PC-3 (cell line): ENCODE measurements at regions of chr6 and their contacts with region 1.

Region 1: GRCh38 chr6:105431226-105431625 is 28.3 kb upstream of the PREP start:
- DNase-seq: peak; percentile 75
- ATAC-seq: no peak
- H3K4me3 ChIP-seq: no peak overlapping the region
- H3K27ac ChIP-seq: no peak overlapping the region
- H3K4me1 ChIP-seq: peaks cover 51% of the 10 kb centered on the region
- H3K27me3 ChIP-seq: no peaks in the 10 kb centered on the region
- CTCF ChIP-seq: peak; percentile 65

Region 2: DNA sequence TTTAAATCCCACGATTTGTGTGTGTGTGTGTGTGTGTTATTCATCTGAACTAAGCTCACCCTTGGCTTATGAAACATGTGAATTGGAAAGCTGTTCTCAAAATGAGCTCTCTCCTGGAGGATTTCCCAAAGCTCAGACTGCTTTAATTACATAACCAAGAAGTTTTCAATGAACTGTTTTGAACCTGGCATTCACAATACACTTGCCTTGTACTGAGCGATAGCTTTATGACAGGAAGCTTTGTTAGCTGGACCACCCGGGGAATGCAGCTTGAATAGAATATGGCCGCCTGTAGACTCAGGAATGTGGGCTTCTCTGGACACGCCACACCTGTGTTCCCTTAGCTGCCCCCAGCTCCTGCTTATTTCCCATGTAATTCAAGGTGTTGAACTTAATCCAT is 43.0 kb after region 1 on chr6:
- CTCF ChIA-PET with region 1: interaction called, 3 read pairs
- POLR2A ChIA-PET with region 1: no interaction called
- intact Hi-C with region 1: loop called (anchors 1 kb)
- DNase-seq: no peak
- ATAC-seq: no peak
- H3K4me3 ChIP-seq: no peak overlapping the region
- H3K27ac ChIP-seq: no peak overlapping the region
- H3K4me1 ChIP-seq: no peaks in the 10 kb centered on the region
- H3K27me3 ChIP-seq: no peaks in the 10 kb centered on the region
- CTCF ChIP-seq: no peak

Region 3: DNA sequence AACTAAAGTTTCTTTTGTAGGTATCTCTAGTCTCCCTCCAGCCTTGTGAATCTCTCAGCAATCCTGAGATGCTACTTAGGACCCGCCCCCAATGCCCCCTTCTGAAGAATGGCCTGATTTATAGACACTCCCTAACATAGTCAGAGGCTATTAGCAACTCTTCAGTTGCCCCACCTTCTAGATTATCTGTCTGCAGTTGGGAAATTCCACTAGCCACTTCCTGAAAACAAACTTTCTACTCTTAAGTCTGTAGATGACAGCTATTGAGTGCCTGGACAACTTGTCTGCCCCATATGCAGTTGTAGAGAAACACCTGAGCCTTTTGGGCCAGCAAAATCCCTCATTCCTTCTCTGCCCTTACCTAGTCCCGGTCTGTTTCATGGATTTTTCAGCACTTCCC is 159.8 kb after region 1 on chr6:
- CTCF ChIA-PET with region 1: no interaction called
- POLR2A ChIA-PET with region 1: no interaction called
- intact Hi-C with region 1: loop called (anchors 10 kb)
- DNase-seq: peak; percentile 53
- ATAC-seq: no peak
- H3K4me3 ChIP-seq: no peak overlapping the region
- H3K27ac ChIP-seq: peak overlapping the region; percentile 99
- H3K4me1 ChIP-seq: peaks cover 81% of the 10 kb centered on the region
- H3K27me3 ChIP-seq: no peaks in the 10 kb centered on the region
- CTCF ChIP-seq: no peak

Region 4: DNA sequence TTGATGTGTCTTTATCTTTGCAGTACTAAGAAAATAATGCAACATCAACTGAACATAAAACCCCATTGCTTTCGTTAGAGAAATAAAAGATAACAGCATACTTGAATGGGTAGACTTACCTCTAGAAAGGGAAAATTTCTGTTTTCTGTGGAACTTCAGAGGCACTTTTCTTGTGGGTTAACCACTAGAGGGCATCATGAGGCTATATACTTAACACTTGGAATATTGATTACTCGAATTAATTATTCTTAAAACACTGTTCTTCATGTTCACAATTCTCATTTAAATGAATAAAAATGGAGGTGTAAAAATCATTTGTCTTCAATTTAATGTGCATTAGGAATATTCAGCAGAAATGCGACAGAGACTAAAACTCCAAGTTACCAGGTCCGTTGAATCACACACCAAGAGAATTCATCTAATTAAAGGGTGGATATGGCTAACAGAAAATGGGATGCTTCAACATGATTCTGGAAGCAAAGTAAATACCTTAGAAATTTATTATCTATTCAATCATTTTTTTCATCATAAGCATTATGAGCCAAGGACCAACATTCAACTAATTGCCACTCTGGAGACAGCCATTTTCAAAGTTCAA is 302.4 kb after region 1 on chr6:
- CTCF ChIA-PET with region 1: no interaction called
- POLR2A ChIA-PET with region 1: no interaction called
- intact Hi-C with region 1: loop called (anchors 5 kb)
- DNase-seq: peak; percentile 55
- ATAC-seq: no peak
- H3K4me3 ChIP-seq: no peak overlapping the region
- H3K27ac ChIP-seq: no peak overlapping the region
- H3K4me1 ChIP-seq: no peaks in the 10 kb centered on the region
- H3K27me3 ChIP-seq: no peaks in the 10 kb centered on the region
- CTCF ChIP-seq: peak; percentile 78

Region 5: GRCh38 chr6:106085984-106086813 is 655.0 kb after region 1 on chr6 and contains the start of gene PRDM1:
- CTCF ChIA-PET with region 1: interaction called, 3 read pairs
- POLR2A ChIA-PET with region 1: interaction called, 4 read pairs
- intact Hi-C with region 1: loop called (anchors 1 kb)
- DNase-seq: peak; percentile 87
- ATAC-seq: peak; percentile 82
- H3K4me3 ChIP-seq: peak within 1 kb of the TSS; percentile 86
- H3K27ac ChIP-seq: peak within 1 kb of the TSS; percentile 68
- H3K4me1 ChIP-seq: peaks cover 52% of the 10 kb centered on the region
- H3K27me3 ChIP-seq: no peaks in the 10 kb centered on the region
- CTCF ChIP-seq: peak; percentile 28; the same call in 1 of the 2 replicates
- total RNA-seq, gene PRDM1: 2.0 and 2.5 TPM in 2 replicates

Region 6: DNA sequence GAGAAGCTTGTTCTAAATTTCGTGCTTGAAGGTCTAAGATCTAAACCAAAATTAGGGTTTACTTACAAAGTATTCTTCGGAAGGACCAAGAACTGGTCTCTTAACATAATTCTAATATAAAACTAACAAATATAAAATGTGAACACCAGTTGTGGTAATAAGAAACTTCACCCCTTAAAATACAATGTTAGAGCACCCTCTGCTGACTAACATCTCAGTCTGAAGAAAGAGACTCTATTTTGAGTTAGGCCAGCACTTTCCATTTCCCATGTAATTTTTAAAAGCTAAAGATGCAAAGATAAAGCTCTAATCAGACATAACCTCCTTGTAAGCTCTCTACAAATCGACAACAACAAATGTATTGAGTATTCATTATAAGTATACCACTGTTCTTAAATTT is 869.7 kb after region 1 on chr6:
- CTCF ChIA-PET with region 1: no interaction called
- POLR2A ChIA-PET with region 1: no interaction called
- intact Hi-C with region 1: loop called (anchors 5 kb)
- DNase-seq: peak; percentile 59
- ATAC-seq: no peak
- H3K4me3 ChIP-seq: no peak overlapping the region
- H3K27ac ChIP-seq: no peak overlapping the region
- H3K4me1 ChIP-seq: no peaks in the 10 kb centered on the region
- H3K27me3 ChIP-seq: no peaks in the 10 kb centered on the region
- CTCF ChIP-seq: peak; percentile 73